ENCODE measurements at regions of chr13 and their contacts with region 1.

Region 1: DNA sequence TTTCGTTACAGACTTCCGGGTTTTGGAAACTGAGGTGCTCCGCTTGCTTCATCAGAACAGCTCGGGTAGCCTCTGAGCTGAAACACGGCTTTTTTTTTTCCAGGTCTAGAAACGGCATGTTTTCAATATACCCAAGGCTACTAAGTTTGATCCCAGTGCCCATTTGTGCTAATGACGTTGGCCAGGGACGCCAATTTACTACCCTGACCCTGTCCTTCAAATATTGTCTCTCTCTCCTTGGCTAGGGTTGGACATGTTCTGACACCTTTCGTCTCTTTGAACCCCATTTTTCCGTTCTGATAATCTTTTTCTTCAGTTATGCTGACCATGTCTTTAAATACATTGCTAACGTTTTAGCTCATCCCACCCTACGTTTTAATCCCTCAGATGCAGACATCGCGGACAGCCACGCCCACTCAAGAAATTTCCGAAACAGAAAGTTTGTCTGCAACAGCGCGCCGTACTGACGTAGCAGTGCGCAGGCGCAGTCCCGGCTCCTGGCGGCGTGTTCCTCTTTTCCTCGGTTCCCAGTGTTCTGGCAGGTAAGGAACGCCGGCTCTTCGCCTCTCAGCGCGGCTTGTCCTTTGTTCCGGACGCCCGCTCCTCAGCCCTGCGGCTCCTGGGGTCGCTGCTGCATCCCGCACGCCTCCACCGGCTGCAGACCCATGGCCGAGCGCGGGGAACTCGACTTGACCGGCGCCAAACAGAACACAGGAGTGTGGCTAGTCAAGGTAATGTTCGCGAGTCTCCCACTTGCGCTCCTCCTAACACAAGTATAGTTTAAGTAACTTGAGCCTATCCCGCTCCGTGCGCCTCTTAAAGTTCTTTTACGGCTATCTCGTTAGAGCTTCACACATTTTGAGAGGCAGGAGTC is at the start of gene GTF2F2:
- DNase-seq: peak; percentile 91
- H3K4me3 Mint-ChIP-seq: no peak within 1 kb of the TSS
- H3K27ac Mint-ChIP-seq: no peak within 1 kb of the TSS
- H3K4me1 Mint-ChIP-seq: peaks cover 8% of the 10 kb centered on the region
- H3K27me3 Mint-ChIP-seq: no peaks in the 10 kb centered on the region
- total RNA-seq, gene GTF2F2: 25.4 to 26.0 TPM

Region 2: GRCh38 chr13:44988973-44989817 is 131.0 kb before region 1 on chr13 and contains the starts of genes GPALPP1 and NUFIP1:
- CTCF ChIA-PET with region 1: no interaction called
- POLR2A ChIA-PET with region 1: no interaction called
- intact Hi-C with region 1: loop called (anchors 1 kb)
- DNase-seq: peak; percentile 96
- H3K4me3 Mint-ChIP-seq: peak within 1 kb of the TSS; percentile 97
- H3K27ac Mint-ChIP-seq: peak within 1 kb of the TSS; percentile 92
- H3K4me1 Mint-ChIP-seq: peaks cover 58% of the 10 kb centered on the region
- H3K27me3 Mint-ChIP-seq: no peaks in the 10 kb centered on the region
- total RNA-seq, gene GPALPP1: 30.1 to 32.7 TPM
- total RNA-seq, gene NUFIP1: 9.3 to 9.5 TPM

Region 3: DNA sequence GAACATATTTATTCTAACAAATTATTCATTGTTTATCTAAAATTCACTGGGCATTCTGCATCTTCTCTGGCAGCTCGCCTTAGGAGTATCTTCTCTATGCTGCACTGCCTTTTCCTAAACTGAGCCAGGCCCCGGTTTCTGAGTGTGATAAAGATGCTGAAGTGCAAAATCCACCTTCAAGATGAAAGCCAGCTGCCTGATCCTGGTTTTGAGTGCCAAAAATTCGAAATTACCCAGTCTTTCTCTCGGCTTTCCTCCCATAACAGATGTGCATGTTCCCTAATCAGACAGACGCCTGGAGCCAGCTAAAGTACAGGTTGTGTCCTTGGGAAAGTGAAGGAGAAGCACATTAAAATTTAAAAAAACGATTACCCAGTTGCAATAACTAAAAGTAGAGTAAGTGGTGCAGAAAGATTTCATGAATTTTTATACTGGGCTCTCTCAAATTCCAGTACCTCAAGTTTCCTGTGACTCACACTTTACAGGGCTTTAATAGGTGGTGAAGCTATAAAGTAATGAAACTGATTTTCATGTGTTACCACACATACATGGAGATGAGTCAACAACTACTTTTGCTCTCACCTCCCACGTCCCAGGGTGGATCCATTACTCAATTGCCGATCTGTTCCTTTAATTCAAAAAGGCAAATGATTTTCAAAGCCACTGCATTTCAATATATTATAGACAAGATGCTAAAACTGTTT is 64.9 kb before region 1 on chr13:
- CTCF ChIA-PET with region 1: interaction called, 3 read pairs
- POLR2A ChIA-PET with region 1: no interaction called
- intact Hi-C with region 1: loop called (anchors 1 kb)
- DNase-seq: peak; percentile 82
- H3K4me3 Mint-ChIP-seq: no peak overlapping the region
- H3K27ac Mint-ChIP-seq: no peak overlapping the region
- H3K4me1 Mint-ChIP-seq: peaks cover 21% of the 10 kb centered on the region
- H3K27me3 Mint-ChIP-seq: peaks cover 44% of the 10 kb centered on the region

Region 4: DNA sequence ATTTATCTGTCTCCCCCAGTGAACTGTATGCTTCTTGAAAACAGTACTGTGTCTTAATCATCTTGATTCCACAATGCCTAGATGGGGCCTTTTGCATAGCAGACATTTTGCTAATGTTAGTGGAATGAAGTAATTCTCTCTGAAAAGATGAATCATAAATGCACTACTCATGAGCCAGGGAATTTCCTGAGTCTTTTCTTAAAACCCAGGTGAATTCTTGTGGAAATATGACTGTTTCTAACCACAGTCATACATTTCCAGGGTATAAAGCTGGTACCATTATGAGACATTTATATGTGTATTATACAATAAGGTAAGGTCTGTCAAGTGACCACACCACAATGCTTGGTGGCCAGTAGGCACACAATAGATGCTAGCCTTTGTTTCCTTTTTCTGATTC is 86.1 kb after region 1 on chr13:
- CTCF ChIA-PET with region 1: no interaction called
- POLR2A ChIA-PET with region 1: no interaction called
- intact Hi-C with region 1: loop called (anchors 2 kb)
- DNase-seq: peak; percentile 34
- H3K4me3 Mint-ChIP-seq: no peak overlapping the region
- H3K27ac Mint-ChIP-seq: no peak overlapping the region
- H3K4me1 Mint-ChIP-seq: peaks cover 23% of the 10 kb centered on the region
- H3K27me3 Mint-ChIP-seq: no peaks in the 10 kb centered on the region

Region 5: DNA sequence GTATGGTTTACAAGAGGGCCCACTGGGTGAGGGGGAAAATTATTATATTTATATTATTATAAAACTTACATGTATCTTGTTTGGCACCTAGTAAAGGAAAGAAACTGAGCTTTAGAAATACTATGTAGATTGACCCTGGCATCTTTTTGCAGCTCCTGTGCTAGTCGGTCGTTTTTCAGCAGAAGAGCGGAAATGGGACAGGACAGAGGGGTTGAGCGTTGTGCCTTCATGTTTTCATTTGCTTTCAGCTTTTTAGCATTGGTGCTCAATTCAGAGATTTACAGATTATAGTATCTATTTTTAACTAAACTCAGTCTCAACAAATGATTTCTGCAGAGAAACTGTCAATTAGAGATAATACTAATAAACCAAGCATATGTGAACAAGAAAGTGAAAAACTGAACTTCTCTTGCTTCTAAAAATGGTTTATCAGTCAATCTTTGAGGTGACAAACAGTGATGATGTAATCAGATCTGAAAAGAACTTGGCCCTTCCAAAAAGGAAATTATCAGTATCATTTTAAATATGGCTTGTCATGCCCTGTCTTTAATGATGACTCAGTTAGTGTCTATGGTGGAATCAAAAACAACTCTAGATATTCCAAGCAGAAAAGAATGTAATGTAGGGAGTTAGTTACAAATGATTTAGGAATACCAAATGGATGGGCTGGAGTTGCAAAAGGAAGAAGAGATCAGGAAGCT is 137.6 kb after region 1 on chr13:
- CTCF ChIA-PET with region 1: no interaction called
- POLR2A ChIA-PET with region 1: interaction called, 3 read pairs
- intact Hi-C with region 1: loop called (anchors 2 kb)
- DNase-seq: no peak
- H3K4me3 Mint-ChIP-seq: no peak overlapping the region
- H3K27ac Mint-ChIP-seq: no peak overlapping the region
- H3K4me1 Mint-ChIP-seq: peaks cover 30% of the 10 kb centered on the region
- H3K27me3 Mint-ChIP-seq: no peaks in the 10 kb centered on the region

Region 6: DNA sequence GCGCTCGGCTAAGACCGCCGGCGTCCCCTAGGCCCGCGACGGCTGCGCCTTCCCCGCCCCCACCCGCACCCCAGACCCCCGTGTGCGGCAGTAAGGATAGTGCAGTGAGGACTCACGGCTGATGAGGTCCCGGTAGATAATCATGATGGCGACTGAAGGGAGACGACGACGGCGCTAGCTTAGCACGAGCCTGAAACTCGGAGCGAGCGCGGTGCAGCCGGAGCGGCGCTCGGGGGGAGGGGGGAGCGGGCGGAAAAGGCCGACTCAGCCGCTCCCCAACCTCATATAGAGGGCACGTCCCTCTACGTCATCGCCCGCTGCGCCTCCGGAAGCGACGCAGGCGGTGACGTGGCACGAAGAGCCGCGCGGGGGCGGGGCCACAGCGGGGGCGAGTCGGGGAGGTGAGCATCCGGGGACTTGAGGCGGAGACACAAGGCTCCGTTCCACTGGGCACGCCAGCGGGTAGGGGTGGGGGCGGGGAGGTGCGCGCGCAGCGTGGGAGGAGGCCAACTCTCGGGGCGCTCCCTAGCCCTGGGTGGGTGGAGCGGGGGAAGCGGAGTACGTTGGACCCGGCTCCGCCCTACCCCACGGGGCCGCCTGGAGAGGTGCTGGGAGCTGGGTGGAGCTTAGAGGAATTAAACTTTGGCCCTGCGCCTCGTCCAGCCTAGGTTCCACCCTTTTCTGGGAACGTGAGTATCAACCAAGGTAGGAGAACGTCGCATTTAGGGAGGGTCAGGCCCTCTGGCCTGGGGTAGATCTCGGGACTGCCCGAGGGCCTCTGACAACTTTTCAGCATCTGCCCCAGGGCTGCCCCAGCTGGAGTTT is 220.9 kb after region 1 on chr13 and contains the start of gene TPT1:
- CTCF ChIA-PET with region 1: no interaction called
- POLR2A ChIA-PET with region 1: no interaction called
- intact Hi-C with region 1: loop called (anchors 1 kb)
- DNase-seq: peak; percentile 100
- H3K4me3 Mint-ChIP-seq: peak within 1 kb of the TSS; percentile 94
- H3K27ac Mint-ChIP-seq: peak within 1 kb of the TSS; percentile 99
- H3K4me1 Mint-ChIP-seq: peaks cover 45% of the 10 kb centered on the region
- H3K27me3 Mint-ChIP-seq: no peaks in the 10 kb centered on the region
- total RNA-seq, gene TPT1: 3,227 to 3,264 TPM